Caco-2 (cell line): ENCODE measurements at regions of chr5 and their contacts with region 1.

Region 1: GRCh38 chr5:172006321-172007174 is at the start of gene FBXW11:
- DNase-seq: peak; percentile 95 to 98
- H3K4me3 ChIP-seq: peak within 1 kb of the TSS; percentile 45
- H3K4me3 Mint-ChIP-seq: peak within 1 kb of the TSS; percentile 90
- H3K27ac Mint-ChIP-seq: peak within 1 kb of the TSS; percentile 92
- H3K4me1 ChIP-seq: peaks cover 32% of the 10 kb centered on the region
- H3K4me1 Mint-ChIP-seq: peaks cover 37% of the 10 kb centered on the region
- H3K27me3 ChIP-seq: no peaks in the 10 kb centered on the region
- H3K27me3 Mint-ChIP-seq: no peaks in the 10 kb centered on the region
- CTCF ChIP-seq: no peak
- total RNA-seq, gene FBXW11: 46.2 and 46.3 TPM in 2 replicates

Region 2: DNA sequence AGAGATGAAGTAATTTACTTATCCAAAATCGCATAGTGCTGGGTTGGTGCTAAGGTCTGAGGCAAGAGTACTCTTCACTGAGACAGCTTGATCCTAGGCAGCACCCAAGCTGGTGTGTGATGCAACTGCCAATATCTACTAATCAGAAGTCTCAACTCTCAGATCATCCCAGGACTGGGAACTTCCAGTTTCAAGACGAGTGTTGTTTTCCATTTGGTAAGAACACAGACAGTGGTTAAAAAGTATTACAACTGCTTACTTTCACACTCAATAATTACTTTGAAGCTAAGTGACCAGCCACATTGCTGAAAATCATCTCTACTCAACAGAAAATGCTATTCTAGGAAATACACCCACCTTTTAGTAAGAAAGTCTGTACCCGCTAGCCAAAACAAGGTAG is 45.4 kb before region 1 on chr5:
- CTCF ChIA-PET with region 1: no interaction called
- POLR2A ChIA-PET with region 1: no interaction called
- intact Hi-C with region 1: loop called (anchors 5 kb)
- DNase-seq: no peak
- H3K4me3 ChIP-seq: no peak overlapping the region
- H3K4me3 Mint-ChIP-seq: no peak overlapping the region
- H3K27ac Mint-ChIP-seq: no peak overlapping the region
- H3K4me1 ChIP-seq: peaks cover 9% of the 10 kb centered on the region
- H3K4me1 Mint-ChIP-seq: peaks cover 5% of the 10 kb centered on the region
- H3K27me3 ChIP-seq: no peaks in the 10 kb centered on the region
- H3K27me3 Mint-ChIP-seq: no peaks in the 10 kb centered on the region
- CTCF ChIP-seq: no peak

Region 3: GRCh38 chr5:172035039-172035438 is 28.5 kb after region 1 on chr5:
- CTCF ChIA-PET with region 1: interaction called, 4 read pairs
- POLR2A ChIA-PET with region 1: no interaction called
- intact Hi-C with region 1: loop called (anchors 1 kb)
- DNase-seq: no peak
- H3K4me3 ChIP-seq: no peak overlapping the region
- H3K4me3 Mint-ChIP-seq: no peak overlapping the region
- H3K27ac Mint-ChIP-seq: no peak overlapping the region
- H3K4me1 ChIP-seq: no peaks in the 10 kb centered on the region
- H3K4me1 Mint-ChIP-seq: no peaks in the 10 kb centered on the region
- H3K27me3 ChIP-seq: no peaks in the 10 kb centered on the region
- H3K27me3 Mint-ChIP-seq: peaks cover under 1% of the 10 kb centered on the region
- CTCF ChIP-seq: no peak